A673 (cell line): ENCODE measurements at regions of chr1 and their contacts with region 1.

Region 1: DNA sequence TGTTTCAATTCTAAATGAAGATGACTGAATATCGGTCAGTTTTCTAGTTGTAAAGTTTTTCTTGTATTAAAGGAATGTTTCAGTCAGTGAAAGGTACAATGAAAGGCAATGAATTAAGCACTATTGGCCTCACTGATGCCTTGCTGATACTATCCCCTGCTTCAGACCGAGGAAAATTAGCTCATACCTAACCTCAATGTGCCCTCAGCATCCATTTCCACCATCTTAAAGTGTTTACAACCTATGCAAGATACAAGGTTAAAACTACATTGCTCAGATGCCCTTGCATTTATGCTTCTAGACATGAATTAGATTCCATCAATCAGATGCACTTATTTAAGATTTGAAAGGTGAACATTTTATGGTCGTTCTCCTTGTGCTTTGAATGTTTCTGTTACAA is 184.5 kb downstream of the COP1 start:
- DNase-seq: no peak
- H3K4me3 ChIP-seq: no peak overlapping the region
- H3K27ac ChIP-seq: no peak overlapping the region
- H3K4me1 ChIP-seq: no peaks in the 10 kb centered on the region
- H3K27me3 ChIP-seq: no peaks in the 10 kb centered on the region
- CTCF ChIP-seq: no peak

Region 2: GRCh38 chr1:175968486-175969172 is 53.9 kb before region 1 on chr1:
- CTCF ChIA-PET with region 1: no interaction called
- POLR2A ChIA-PET with region 1: no interaction called
- intact Hi-C with region 1: loop called (anchors 10 kb)
- DNase-seq: peak; percentile 65
- H3K4me3 ChIP-seq: no peak overlapping the region
- H3K27ac ChIP-seq: no peak overlapping the region
- H3K4me1 ChIP-seq: peaks cover 13% of the 10 kb centered on the region
- H3K27me3 ChIP-seq: no peaks in the 10 kb centered on the region
- CTCF ChIP-seq: no peak